ENCODE measurements at regions of chr10 and their contacts with region 1.

Region 1: DNA sequence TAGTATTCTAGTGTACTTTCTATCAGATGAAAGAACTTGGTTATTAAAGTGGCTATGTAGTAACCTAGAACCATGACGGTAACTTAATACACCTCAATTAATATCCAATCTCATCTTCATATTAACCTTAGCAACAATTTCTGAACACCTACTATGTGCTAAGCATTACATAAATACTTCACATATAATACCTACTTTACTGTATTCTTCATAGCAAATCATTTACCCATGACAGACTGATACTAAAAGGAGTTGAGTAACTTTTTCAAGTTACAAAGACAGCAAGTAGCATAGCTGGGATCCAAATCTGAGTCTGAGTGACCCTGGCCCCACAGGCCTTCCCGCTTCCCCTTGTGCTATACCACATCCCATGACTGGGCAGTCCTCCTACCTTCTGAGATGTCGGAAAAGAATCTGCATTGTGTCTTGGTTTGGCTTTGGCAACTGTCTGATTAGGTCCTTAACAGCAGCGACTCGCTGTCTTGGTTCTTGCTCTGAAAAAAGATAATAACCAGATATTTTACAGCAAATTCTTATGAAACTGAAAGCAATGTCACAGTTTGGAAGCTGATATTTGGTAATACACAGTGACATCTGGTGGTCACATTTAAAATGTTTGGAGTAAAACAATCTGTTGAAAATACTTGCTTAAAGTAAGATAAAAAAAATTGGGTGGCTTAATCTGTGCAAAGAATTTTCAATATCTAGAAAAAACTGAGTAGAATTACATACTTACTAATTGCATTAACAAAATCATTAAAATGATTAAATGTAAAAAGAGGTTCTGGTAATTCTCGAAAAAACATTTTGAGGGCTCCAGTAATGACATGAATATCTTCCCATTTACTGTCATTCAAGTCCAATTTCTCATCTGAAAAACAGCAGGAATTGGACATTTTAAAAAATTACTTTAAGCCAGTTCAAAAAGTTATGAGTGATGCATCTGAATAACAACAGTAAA is 120.1 kb downstream of the ARHGAP12 start:
- DNase-seq: peak; percentile 49
- ATAC-seq: peak; percentile 96
- H3K4me3 ChIP-seq: no peak overlapping the region
- H3K27ac ChIP-seq: peak overlapping the region; percentile 77
- H3K4me1 ChIP-seq: peaks cover 3% of the 10 kb centered on the region
- H3K27me3 ChIP-seq: no peaks in the 10 kb centered on the region
- CTCF ChIP-seq: peak; percentile 27 to 59 (median 42); a peak in 5 of 6 replicates
- EP300 ChIP-seq: no peak
- POLR2A ChIP-seq: no peak
- RAD21 ChIP-seq: peak; percentile 78

Region 2: GRCh38 chr10:30722956-30723620 is 1085.5 kb before region 1 on chr10:
- CTCF ChIA-PET with region 1: interaction called, 10 read pairs
- POLR2A ChIA-PET with region 1: no interaction called
- RAD21 ChIA-PET with region 1: no interaction called
- SMC1A ChIA-PET with region 1: interaction called, 3 read pairs
- in situ Hi-C with region 1: no loop called
- intact Hi-C with region 1: loop called (anchors 1 kb)
- DNase-seq: no peak
- ATAC-seq: no peak
- H3K4me3 ChIP-seq: no peak overlapping the region
- H3K27ac ChIP-seq: no peak overlapping the region
- H3K4me1 ChIP-seq: peaks cover 6% of the 10 kb centered on the region
- H3K27me3 ChIP-seq: no peaks in the 10 kb centered on the region
- CTCF ChIP-seq: no peak
- EP300 ChIP-seq: no peak
- POLR2A ChIP-seq: no peak
- RAD21 ChIP-seq: no peak

Region 3: DNA sequence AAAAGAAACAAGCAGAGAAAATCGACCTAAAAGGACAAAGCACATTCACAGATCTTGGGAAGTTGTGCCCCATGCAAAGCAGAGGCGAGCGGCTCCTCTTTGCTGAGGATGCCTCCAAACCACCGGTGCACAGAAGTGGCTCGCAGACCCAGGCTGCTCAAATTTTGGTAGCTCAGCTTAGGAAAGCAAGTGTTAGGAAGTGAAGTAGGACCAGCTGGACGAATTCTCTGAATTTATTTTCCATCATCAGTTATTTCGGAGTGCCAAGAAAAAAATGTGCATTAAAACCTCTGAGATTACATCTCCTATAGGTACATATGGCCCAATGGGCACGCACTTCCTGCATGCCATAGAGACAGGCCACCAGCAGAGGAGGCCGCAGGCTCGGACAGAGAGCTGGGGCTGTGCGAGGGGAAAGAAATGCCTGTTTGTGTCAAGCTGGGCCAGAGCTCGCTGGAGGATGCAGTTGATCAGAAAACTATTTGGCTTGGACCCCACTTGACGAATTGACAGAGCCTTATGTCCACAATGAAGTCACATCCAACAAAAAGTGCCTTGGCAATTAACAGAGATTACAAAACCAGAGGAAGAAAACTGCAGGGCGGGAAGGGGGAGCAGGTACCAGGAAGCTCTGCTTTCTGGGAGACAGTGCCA is 1056.7 kb before region 1 on chr10:
- CTCF ChIA-PET with region 1: interaction called, 32 read pairs
- POLR2A ChIA-PET with region 1: no interaction called
- RAD21 ChIA-PET with region 1: interaction called, 14 read pairs
- SMC1A ChIA-PET with region 1: interaction called, 8 read pairs
- in situ Hi-C with region 1: no loop called
- intact Hi-C with region 1: loop called (anchors 1 kb)
- DNase-seq: peak; percentile 32
- ATAC-seq: peak; percentile 87
- H3K4me3 ChIP-seq: no peak overlapping the region
- H3K27ac ChIP-seq: peak overlapping the region; percentile 71
- H3K4me1 ChIP-seq: peaks cover 32% of the 10 kb centered on the region
- H3K27me3 ChIP-seq: no peaks in the 10 kb centered on the region
- CTCF ChIP-seq: peak; percentile 80 to 87 (median 81)
- EP300 ChIP-seq: no peak
- POLR2A ChIP-seq: no peak
- RAD21 ChIP-seq: peak; percentile 97

Region 4: DNA sequence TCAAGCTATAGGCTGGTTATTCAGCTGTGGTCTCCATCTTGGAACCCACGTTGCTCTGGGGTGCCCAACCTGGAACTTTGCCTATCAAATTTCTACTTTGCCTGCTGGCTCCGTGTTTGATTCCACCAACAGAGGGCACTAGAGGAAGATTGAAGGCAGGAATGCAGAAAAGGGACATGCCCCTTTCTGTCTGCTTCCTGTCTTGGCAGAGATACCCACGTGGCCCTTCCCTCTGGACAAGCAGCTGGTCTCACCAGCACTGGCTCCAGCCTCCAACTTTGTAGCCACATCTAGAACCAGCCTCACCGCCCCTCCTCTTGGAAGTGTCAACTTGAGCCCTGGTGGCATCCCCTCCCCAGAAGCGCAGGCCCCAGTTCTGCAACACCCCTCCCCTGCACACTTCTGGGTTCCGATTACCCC is 724.8 kb before region 1 on chr10:
- CTCF ChIA-PET with region 1: interaction called, 4 read pairs
- POLR2A ChIA-PET with region 1: no interaction called
- RAD21 ChIA-PET with region 1: interaction called, 6 read pairs
- SMC1A ChIA-PET with region 1: interaction called, 5 read pairs
- in situ Hi-C with region 1: no loop called
- intact Hi-C with region 1: loop called (anchors 10 kb)
- DNase-seq: peak; percentile 26
- ATAC-seq: peak; percentile 87
- H3K4me3 ChIP-seq: no peak overlapping the region
- H3K27ac ChIP-seq: no peak overlapping the region
- H3K4me1 ChIP-seq: no peaks in the 10 kb centered on the region
- H3K27me3 ChIP-seq: no peaks in the 10 kb centered on the region
- CTCF ChIP-seq: peak; percentile 55 to 65 (median 62)
- EP300 ChIP-seq: no peak
- POLR2A ChIP-seq: no peak
- RAD21 ChIP-seq: peak; percentile 77

Region 5: DNA sequence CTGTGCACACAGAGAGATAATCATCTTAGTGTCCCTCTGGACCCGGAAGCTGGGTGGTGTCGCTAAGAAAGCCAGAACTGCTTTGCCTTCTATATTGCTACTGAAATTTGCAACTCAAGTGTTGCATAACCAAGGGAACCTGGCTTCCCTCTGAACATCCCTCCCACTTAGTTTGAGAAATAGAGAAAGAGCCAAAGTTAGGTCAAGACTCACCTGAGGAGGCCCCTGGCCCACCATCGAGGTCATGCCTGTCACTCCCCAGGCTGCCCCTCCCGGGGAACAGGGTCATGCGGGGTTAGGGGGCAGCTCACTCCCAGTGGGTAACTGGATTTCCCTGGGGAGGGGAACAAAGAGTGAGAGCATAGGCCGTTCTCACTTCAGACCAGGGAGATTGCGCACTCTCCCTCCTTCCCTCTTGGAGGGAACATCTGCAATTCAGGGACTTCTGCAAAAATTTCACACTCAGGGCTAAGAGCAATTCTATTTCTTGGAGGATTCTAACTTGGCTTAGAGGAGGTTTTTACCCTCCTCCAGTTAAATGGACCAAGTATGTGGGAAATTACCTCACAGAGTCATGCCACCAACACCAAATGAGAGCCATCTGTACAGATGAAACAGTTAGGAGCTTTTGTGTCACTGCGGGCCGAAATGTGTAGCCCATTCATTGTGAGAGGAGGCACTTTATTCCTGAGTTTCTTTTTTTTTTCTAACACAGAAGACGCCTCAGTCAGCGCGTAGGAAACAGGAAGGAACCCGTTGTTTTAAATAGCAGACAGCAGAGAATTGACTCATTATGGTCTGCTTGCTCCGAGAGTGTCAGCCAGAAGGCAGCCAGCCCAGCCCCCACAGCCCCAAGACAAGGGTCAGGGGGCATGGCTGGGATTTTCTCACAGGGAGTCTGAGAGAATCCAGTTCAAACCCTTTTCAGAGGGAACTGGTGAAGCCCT is 101.2 kb before region 1 on chr10:
- CTCF ChIA-PET with region 1: interaction called, 17 read pairs
- POLR2A ChIA-PET with region 1: no interaction called
- RAD21 ChIA-PET with region 1: interaction called, 8 read pairs
- SMC1A ChIA-PET with region 1: interaction called, 6 read pairs
- in situ Hi-C with region 1: no loop called
- intact Hi-C with region 1: loop called (anchors 2 kb)
- DNase-seq: peak; percentile 90
- ATAC-seq: peak; percentile 93
- H3K4me3 ChIP-seq: peak overlapping the region; percentile 52
- H3K27ac ChIP-seq: peak overlapping the region; percentile 92
- H3K4me1 ChIP-seq: peaks cover 31% of the 10 kb centered on the region
- H3K27me3 ChIP-seq: no peaks in the 10 kb centered on the region
- CTCF ChIP-seq: no peak
- EP300 ChIP-seq: peak; percentile 80 to 88
- POLR2A ChIP-seq: no peak
- RAD21 ChIP-seq: peak; percentile 28; the same call in 1 of the 2 replicates